Mammary epithelial cell (primary cell): ENCODE measurements at regions of chr13 and their contacts with region 1.

Region 1: DNA sequence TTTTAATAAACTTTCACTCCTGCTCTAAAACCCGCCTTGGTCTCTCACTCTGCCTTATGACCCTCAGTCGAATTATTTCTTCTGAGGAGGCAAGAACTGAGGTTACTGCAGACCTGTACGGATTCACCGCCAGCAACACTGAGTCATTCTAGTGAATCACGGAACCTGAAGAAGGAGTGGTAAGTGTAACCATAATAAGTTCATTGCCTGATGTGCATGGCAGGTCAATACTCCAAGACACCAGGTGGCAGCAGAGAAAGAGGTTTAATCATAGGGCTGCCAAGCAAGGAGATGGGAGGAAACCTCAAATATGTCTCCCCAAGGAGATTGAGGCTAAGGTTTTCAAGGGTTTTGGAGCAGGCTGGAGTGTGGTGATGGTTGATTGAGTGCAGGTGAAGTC is 204.3 kb upstream of the IPO5 start:
- DNase-seq: peak; percentile 89
- H3K4me3 ChIP-seq: no peak overlapping the region
- H3K27ac ChIP-seq: no peak overlapping the region
- H3K4me1 ChIP-seq: no peaks in the 10 kb centered on the region
- H3K27me3 ChIP-seq: no peaks in the 10 kb centered on the region
- CTCF ChIP-seq: peak; percentile 18 to 49

Region 2: DNA sequence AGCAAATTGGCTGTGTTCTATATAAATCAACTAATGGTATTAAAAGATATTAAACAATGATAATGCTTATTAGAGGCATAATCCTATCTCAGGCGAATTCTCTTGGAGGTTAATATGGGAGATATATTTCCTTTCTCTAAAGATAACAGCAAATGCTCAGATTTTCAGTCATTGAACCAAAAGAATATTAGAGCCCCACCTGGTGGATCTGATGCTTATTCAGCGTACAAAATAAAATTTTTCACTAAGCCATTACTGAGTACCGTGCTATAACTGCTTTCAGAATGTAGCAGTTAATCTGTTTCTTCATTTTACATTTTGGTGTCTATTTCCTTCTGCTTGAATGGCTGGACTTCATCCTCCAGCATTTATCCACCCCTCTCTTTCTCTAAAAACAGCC is 61.0 kb after region 1 on chr13:
- CTCF ChIA-PET with region 1: no interaction called
- dilution Hi-C with region 1: no loop called
- in situ Hi-C with region 1: no loop called
- intact Hi-C with region 1: loop called (anchors 2 kb)
- DNase-seq: no peak
- H3K4me3 ChIP-seq: no peak overlapping the region
- H3K27ac ChIP-seq: no peak overlapping the region
- H3K4me1 ChIP-seq: peaks cover 2% of the 10 kb centered on the region
- H3K27me3 ChIP-seq: no peaks in the 10 kb centered on the region
- CTCF ChIP-seq: peak; percentile 9 to 46

Region 3: DNA sequence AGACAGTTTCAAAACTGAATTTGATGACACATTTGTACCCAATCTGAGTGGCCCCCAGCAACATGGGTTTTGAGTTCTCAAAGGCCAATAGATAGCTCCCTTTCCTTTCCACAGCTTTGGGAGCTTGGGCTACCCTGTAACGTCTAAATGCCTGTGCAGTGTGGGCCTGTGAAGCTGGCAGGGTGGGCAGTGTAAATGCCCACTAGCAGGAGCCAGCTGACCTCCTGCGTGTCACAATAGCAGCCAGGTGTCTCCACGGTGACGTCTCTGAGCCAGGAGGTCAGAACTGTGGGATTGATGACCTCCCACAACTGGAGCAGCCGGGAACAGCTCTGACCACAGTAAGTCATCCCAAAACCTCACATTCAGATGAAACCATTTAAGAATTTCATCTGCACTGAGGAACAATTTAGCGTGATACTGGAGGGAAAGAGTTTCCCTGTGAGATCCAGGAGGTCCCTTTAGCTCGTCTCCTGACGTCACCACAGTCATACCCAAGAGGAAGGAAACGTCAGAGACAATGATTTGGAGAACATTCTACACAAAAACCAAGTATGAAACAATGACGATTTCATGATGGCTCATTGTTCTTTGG is 204.3 kb after region 1 on chr13 and contains the start of gene IPO5:
- CTCF ChIA-PET with region 1: no interaction called
- dilution Hi-C with region 1: no loop called
- in situ Hi-C with region 1: no loop called
- intact Hi-C with region 1: no loop called
- DNase-seq: no peak
- H3K4me3 ChIP-seq: no peak within 1 kb of the TSS
- H3K27ac ChIP-seq: no peak within 1 kb of the TSS
- H3K4me1 ChIP-seq: no peaks in the 10 kb centered on the region
- H3K27me3 ChIP-seq: no peaks in the 10 kb centered on the region
- CTCF ChIP-seq: no peak
- total RNA-seq, gene IPO5: 157 to 175 TPM

Region 4: GRCh38 chr13:98697791-98698190 is 948.6 kb after region 1 on chr13:
- CTCF ChIA-PET with region 1: no interaction called
- dilution Hi-C with region 1: no loop called
- in situ Hi-C with region 1: no loop called
- intact Hi-C with region 1: no loop called
- DNase-seq: no peak
- H3K4me3 ChIP-seq: no peak overlapping the region
- H3K27ac ChIP-seq: no peak overlapping the region
- H3K4me1 ChIP-seq: no peaks in the 10 kb centered on the region
- H3K27me3 ChIP-seq: no peaks in the 10 kb centered on the region
- CTCF ChIP-seq: no peak